ENCODE measurements at regions of chr22 and their contacts with region 1.

Region 1: DNA sequence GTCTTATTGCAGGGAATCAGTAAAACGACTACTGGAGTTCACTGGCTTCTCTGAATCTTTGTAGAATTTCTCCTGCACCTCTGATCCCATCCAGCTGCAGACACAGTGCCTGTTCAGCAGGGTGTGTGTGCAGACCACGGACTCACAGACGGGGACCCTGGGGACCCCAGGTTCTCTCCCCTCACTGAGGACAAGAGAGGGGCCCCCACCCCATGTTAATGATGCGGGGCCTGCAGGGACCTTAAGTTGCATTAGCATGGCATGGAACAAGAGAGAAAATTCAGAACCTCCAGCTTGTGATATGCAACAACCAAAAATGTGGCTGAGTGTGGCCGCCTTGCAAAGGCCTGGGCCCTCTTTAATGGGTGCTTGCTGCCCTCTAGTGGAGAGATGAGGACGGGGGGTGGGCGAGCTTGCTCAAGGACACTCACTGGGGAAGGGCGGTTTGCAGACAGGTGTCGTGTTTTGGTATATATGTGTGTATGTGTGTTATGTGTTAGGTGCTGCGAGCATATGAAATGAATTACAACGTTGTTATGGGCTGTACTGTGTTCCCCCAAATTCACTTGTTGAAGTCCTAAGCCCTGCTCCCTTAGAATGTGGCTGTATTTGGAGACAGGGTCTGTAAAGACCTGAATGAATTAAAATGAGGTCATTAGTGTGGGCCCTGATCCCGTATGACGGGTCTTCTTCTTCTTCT is 84.4 kb upstream of the SEPTIN5 start:
- DNase-seq: peak; percentile 80 to 87
- H3K4me3 ChIP-seq: no peak overlapping the region
- H3K4me3 Mint-ChIP-seq: no peak overlapping the region
- H3K27ac Mint-ChIP-seq: no peak overlapping the region
- H3K4me1 ChIP-seq: no peaks in the 10 kb centered on the region
- H3K4me1 Mint-ChIP-seq: no peaks in the 10 kb centered on the region
- H3K27me3 ChIP-seq: no peaks in the 10 kb centered on the region
- H3K27me3 Mint-ChIP-seq: peaks cover 6% of the 10 kb centered on the region
- CTCF ChIP-seq: peak; percentile 88 to 94

Region 2: GRCh38 chr22:19178656-19179496 is 451.0 kb before region 1 on chr22 and contains the start of gene SLC25A1:
- CTCF ChIA-PET with region 1: interaction called, 10 read pairs
- POLR2A ChIA-PET with region 1: no interaction called
- intact Hi-C with region 1: no loop called
- DNase-seq: peak; percentile 91 to 95
- H3K4me3 ChIP-seq: peak within 1 kb of the TSS; percentile 92
- H3K4me3 Mint-ChIP-seq: peak within 1 kb of the TSS; percentile 78
- H3K27ac Mint-ChIP-seq: peak within 1 kb of the TSS; percentile 70
- H3K4me1 ChIP-seq: peaks cover 28% of the 10 kb centered on the region
- H3K4me1 Mint-ChIP-seq: no peaks in the 10 kb centered on the region
- H3K27me3 ChIP-seq: no peaks in the 10 kb centered on the region
- H3K27me3 Mint-ChIP-seq: no peaks in the 10 kb centered on the region
- CTCF ChIP-seq: no peak
- total RNA-seq, gene SLC25A1: 142 and 155 TPM in 2 replicates

Region 3: DNA sequence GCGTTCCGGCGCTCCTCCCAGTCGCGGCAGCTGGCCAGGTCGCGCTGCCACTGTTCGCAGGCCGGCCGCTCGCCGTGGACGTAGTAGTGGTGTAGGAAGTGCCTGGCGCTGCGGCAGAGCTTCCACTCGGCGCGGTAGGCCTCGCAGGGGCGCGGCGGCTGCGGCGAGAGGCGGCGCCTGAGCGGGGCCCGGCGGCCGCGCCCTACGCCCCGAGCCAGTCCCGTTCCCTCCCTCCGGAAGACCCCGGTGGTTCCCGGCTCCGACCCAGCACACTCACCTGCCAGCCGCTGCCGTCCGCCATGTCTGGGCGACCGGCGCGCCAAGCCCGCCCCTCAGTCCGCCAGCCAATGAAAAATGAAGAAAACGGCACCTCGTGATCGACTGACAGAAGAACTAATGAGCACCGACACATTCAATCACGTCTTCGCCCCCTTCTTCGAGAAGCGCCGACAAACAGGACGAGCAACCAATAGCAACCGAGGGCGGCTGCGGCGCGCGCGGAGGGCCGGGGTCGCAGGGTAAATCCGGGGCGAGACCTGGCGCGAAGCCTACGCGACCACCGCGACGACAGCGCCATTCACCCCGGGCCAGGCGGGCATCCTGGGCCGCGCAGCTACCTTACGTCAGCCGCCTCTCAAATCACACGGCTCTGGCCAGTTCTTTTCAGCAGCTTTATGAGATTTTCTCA is 182.3 kb before region 1 on chr22 and contains the start of gene C22orf39:
- CTCF ChIA-PET with region 1: interaction called, 9 read pairs
- POLR2A ChIA-PET with region 1: no interaction called
- intact Hi-C with region 1: loop called (anchors 1 kb)
- DNase-seq: peak; percentile 93 to 94
- H3K4me3 ChIP-seq: peak within 1 kb of the TSS; percentile 76
- H3K4me3 Mint-ChIP-seq: peak within 1 kb of the TSS; percentile 81
- H3K27ac Mint-ChIP-seq: peak within 1 kb of the TSS; percentile 76
- H3K4me1 ChIP-seq: no peaks in the 10 kb centered on the region
- H3K4me1 Mint-ChIP-seq: peaks cover 17% of the 10 kb centered on the region
- H3K27me3 ChIP-seq: no peaks in the 10 kb centered on the region
- H3K27me3 Mint-ChIP-seq: no peaks in the 10 kb centered on the region
- CTCF ChIP-seq: no peak
- total RNA-seq, gene C22orf39: 30.7 and 36.1 TPM in 2 replicates

Region 4: GRCh38 chr22:19473578-19473977 is 156.3 kb before region 1 on chr22:
- CTCF ChIA-PET with region 1: interaction called, 11 read pairs
- POLR2A ChIA-PET with region 1: no interaction called
- intact Hi-C with region 1: loop called (anchors 10 kb)
- DNase-seq: peak in 1 of 2 experiments; percentile 13
- H3K4me3 ChIP-seq: no peak overlapping the region
- H3K4me3 Mint-ChIP-seq: no peak overlapping the region
- H3K27ac Mint-ChIP-seq: no peak overlapping the region
- H3K4me1 ChIP-seq: no peaks in the 10 kb centered on the region
- H3K4me1 Mint-ChIP-seq: peaks cover 14% of the 10 kb centered on the region
- H3K27me3 ChIP-seq: no peaks in the 10 kb centered on the region
- H3K27me3 Mint-ChIP-seq: no peaks in the 10 kb centered on the region
- CTCF ChIP-seq: no peak

Region 5: DNA sequence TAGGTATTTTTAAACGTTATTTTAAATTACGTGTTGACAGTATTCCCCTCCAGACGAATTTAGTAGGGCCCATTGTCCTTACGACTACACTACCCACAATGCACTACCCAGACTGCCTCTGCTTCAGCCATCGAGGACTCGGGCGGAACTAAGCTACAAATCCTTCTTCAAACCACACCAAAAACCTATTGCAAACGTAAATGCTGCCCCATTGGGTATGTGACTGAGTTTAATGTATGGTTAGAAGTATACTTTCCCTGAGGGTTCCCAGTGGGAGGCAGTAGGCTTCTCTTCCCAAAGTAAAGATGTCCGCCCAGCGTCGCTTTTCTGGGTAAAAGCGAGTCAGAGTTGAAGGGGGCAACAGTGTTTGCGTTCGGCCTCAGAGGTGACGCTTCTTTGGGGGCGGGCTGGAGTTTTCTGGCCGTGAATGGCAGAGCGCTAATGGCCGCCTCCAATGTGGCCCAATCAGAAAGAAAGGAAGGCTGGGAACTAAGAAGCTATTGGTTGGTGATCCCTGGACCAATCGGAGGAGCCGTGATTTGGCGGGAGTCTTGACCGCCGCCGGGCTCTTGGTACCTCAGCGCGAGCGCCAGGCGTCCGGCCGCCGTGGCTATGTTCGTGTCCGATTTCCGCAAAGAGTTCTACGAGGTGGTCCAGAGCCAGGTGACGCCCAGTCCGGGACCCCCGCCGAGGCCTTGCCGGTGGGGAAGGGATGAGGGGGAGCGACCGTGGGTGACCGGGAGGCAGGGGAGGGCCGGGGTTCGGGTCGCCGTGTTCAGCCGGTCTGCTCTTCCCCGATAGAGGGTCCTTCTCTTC is 150.3 kb before region 1 on chr22 and contains the start of gene CDC45:
- CTCF ChIA-PET with region 1: interaction called, 11 read pairs
- POLR2A ChIA-PET with region 1: interaction called, 3 read pairs
- intact Hi-C with region 1: loop called (anchors 10 kb)
- DNase-seq: peak; percentile 95 to 97
- H3K4me3 ChIP-seq: peak within 1 kb of the TSS; percentile 96
- H3K4me3 Mint-ChIP-seq: peak within 1 kb of the TSS; percentile 95
- H3K27ac Mint-ChIP-seq: peak within 1 kb of the TSS; percentile 100
- H3K4me1 ChIP-seq: peaks cover 6% of the 10 kb centered on the region; the same call in 1 of the 2 replicates
- H3K4me1 Mint-ChIP-seq: peaks cover 23% of the 10 kb centered on the region
- H3K27me3 ChIP-seq: no peaks in the 10 kb centered on the region
- H3K27me3 Mint-ChIP-seq: no peaks in the 10 kb centered on the region
- CTCF ChIP-seq: no peak
- total RNA-seq, gene CDC45: 41.7 and 44.6 TPM in 2 replicates

Region 6: DNA sequence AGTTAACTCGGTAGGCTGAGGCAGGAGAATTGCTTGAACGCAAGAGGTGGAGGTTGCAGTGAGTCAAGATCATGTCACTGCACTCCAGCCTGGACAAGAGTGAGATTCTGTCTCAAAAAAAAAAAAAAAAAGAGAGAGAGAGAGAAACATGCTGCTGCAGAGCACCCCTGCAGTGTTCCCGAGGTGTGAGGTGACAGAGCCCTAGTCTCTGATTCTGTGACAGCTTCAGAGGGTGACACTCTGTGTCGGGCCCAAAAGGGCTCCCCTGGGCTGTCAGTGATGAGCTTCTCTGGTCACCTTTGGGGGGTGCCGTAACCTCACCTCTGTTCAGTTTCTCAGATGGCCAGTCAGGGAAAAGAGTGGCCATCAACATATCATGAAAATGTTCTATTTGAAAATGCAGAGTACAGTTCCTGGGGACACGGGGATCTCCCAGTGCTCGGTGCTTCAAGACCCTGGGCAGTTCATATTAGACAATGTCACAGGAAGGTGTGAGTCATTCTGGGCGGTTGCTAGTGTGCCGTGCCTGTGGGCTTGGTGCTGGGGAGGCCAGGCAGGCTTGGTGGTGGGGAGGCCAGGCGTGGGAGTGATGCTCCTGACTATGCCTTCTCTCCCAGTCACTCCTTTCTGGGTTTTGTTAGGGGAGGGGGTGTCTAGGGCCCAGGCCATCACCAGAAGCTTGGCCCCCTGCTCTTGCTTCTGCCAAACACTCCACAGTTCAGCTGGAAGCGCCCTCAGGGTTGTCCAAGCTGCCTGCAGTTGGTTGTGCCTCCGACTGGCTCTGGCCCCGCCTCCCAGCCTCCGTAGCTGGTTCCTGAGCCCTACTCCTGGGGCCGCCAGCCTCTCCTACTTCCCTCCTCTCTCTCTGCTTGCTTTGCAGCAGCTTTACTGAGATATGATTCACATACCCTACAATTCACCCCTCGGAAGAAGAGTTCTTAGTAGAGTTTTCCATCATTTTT is 53.1 kb before region 1 on chr22:
- CTCF ChIA-PET with region 1: interaction called, 6 read pairs
- POLR2A ChIA-PET with region 1: no interaction called
- intact Hi-C with region 1: loop called (anchors 5 kb)
- DNase-seq: no peak
- H3K4me3 ChIP-seq: no peak overlapping the region
- H3K4me3 Mint-ChIP-seq: no peak overlapping the region
- H3K27ac Mint-ChIP-seq: no peak overlapping the region
- H3K4me1 ChIP-seq: no peaks in the 10 kb centered on the region
- H3K4me1 Mint-ChIP-seq: no peaks in the 10 kb centered on the region
- H3K27me3 ChIP-seq: no peaks in the 10 kb centered on the region
- H3K27me3 Mint-ChIP-seq: peaks cover 7% of the 10 kb centered on the region
- CTCF ChIP-seq: no peak

Region 7: GRCh38 chr22:19717691-19718455 is 88.0 kb after region 1 on chr22:
- CTCF ChIA-PET with region 1: no interaction called
- POLR2A ChIA-PET with region 1: no interaction called
- intact Hi-C with region 1: loop called (anchors 10 kb)
- DNase-seq: peak in 1 of 2 experiments; percentile 85
- H3K4me3 ChIP-seq: peak overlapping the region; percentile 56
- H3K4me3 Mint-ChIP-seq: peak overlapping the region; percentile 70
- H3K27ac Mint-ChIP-seq: no peak overlapping the region
- H3K4me1 ChIP-seq: peaks cover 7% of the 10 kb centered on the region
- H3K4me1 Mint-ChIP-seq: no peaks in the 10 kb centered on the region
- H3K27me3 ChIP-seq: no peaks in the 10 kb centered on the region
- H3K27me3 Mint-ChIP-seq: no peaks in the 10 kb centered on the region
- CTCF ChIP-seq: peak; percentile 81 to 93

Measured in Caco-2 (cell line).